ENCODE measurements at regions of chr3 and their contacts with region 1.

Region 1: GRCh38 chr3:141279077-141279967 is 47.7 kb downstream of the PXYLP1 start:
- DNase-seq: no peak
- H3K4me3 Mint-ChIP-seq: no peak overlapping the region
- H3K27ac Mint-ChIP-seq: peak overlapping the region; percentile 71
- H3K4me1 Mint-ChIP-seq: peaks cover 35% of the 10 kb centered on the region
- H3K27me3 Mint-ChIP-seq: no peaks in the 10 kb centered on the region

Region 2: GRCh38 chr3:141011232-141011996 is 267.9 kb before region 1 on chr3:
- intact Hi-C with region 1: loop called (anchors 10 kb)
- DNase-seq: peak; percentile 63
- H3K4me3 Mint-ChIP-seq: no peak overlapping the region
- H3K27ac Mint-ChIP-seq: no peak overlapping the region
- H3K4me1 Mint-ChIP-seq: peaks cover 13% of the 10 kb centered on the region
- H3K27me3 Mint-ChIP-seq: peaks cover 39% of the 10 kb centered on the region

Region 3: GRCh38 chr3:141237701-141238521 is 41.4 kb before region 1 on chr3:
- intact Hi-C with region 1: loop called (anchors 1 kb)
- DNase-seq: no peak
- H3K4me3 Mint-ChIP-seq: peak overlapping the region; percentile 43
- H3K27ac Mint-ChIP-seq: peak overlapping the region; percentile 82
- H3K4me1 Mint-ChIP-seq: peaks cover 84% of the 10 kb centered on the region
- H3K27me3 Mint-ChIP-seq: no peaks in the 10 kb centered on the region

Region 4: GRCh38 chr3:141243271-141243707 is 36.0 kb before region 1 on chr3:
- intact Hi-C with region 1: loop called (anchors 1 kb)
- DNase-seq: peak; percentile 61
- H3K4me3 Mint-ChIP-seq: peak overlapping the region; percentile 32
- H3K27ac Mint-ChIP-seq: peak overlapping the region; percentile 87
- H3K4me1 Mint-ChIP-seq: peaks cover 60% of the 10 kb centered on the region
- H3K27me3 Mint-ChIP-seq: no peaks in the 10 kb centered on the region

Region 5: GRCh38 chr3:141402476-141403171 is 123.3 kb after region 1 on chr3:
- intact Hi-C with region 1: no loop called
- DNase-seq: peak; percentile 35
- H3K4me3 Mint-ChIP-seq: peak overlapping the region; percentile 80
- H3K27ac Mint-ChIP-seq: peak overlapping the region; percentile 28
- H3K4me1 Mint-ChIP-seq: peaks cover 36% of the 10 kb centered on the region
- H3K27me3 Mint-ChIP-seq: no peaks in the 10 kb centered on the region